Ascending aorta (tissue), 2 donors: ENCODE measurements at regions of chr1 and their contacts with region 1.

Region 1: DNA sequence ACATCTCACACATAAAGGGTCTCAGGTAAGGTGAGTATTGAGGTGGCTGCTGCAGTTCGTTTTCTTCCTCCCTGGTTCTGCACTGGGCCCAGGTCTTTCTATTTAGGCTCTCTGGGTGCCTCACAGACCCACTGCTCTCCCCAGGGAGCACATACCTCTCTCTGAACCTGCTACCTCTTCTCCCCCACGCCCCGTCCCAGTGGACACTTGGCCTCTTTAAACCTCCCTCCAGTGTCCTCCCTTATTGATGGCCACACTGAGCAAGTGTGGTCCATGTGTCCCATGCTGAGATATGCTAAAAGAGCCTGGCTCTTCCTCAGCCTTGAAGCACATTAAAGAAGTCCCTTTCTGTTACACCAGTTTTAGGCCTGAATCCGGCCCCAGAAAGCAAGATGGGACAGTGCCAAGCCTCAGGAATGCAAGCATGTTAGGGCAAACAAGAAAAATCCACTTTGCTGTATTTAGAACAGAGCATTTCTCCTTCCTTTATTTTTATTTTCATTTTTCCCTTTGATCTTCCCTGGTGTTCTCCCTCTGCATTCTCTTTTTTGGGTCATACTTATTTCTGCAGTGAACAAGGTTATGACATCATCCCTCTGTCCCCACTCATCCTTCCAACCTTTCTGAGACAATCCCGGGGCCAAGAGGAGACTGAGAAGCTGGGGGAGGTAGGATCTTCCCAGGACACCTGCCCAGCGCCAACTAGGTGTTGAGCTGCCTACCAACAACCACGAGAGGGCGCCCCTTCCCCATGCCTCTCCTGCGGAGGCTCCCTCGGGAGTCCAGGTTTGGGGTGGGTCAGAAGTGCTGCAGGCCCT is 5.0 kb upstream of the CHI3L2 start:
- DNase-seq: peak in 1 of 2 donors; percentile 77
- H3K4me3 ChIP-seq: no peak overlapping the region
- H3K27ac ChIP-seq: no peak overlapping the region
- H3K4me1 ChIP-seq: peaks cover 0 to 4% of the 10 kb centered on the region in 2 donors
- H3K27me3 ChIP-seq: no peaks in the 10 kb centered on the region
- CTCF ChIP-seq: peak; percentile 73 to 92 (median 76)

Region 2: DNA sequence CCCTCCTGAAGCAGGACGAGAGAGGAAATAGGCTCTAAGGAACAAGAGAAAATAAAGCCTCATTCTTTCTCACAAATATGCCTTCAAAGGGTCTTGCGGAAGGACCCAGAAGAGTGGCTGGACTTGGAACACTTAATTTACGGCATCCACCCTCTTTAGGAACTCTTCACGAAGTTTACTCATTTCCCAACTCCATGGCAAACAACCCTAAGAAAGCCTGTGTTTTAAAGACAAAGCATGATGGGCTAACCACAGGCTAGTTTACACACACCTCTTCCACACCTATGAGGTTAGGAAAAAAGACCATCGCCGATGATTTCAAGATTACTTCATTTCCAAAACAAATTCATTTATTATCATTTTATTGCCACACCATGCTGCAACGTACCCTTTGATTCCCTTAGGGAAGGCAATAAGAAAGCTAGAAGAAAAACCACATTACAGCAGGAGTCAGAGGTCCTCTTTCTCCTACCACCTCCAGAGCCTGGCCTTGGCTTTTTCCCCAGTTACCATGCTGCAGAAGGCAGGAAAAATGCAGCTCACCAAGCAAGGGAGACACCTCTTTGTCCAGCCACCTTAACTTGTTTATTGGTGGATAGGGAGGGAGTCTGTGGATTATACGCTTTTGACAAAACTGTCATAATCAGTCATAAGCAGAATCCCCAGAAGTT is 34.6 kb after region 1 on chr1:
- intact Hi-C with region 1: no loop called
- DNase-seq: no peak
- H3K4me3 ChIP-seq: no peak overlapping the region
- H3K27ac ChIP-seq: no peak overlapping the region
- H3K4me1 ChIP-seq: no peaks in the 10 kb centered on the region
- H3K27me3 ChIP-seq: no peaks in the 10 kb centered on the region
- CTCF ChIP-seq: no peak

Region 3: DNA sequence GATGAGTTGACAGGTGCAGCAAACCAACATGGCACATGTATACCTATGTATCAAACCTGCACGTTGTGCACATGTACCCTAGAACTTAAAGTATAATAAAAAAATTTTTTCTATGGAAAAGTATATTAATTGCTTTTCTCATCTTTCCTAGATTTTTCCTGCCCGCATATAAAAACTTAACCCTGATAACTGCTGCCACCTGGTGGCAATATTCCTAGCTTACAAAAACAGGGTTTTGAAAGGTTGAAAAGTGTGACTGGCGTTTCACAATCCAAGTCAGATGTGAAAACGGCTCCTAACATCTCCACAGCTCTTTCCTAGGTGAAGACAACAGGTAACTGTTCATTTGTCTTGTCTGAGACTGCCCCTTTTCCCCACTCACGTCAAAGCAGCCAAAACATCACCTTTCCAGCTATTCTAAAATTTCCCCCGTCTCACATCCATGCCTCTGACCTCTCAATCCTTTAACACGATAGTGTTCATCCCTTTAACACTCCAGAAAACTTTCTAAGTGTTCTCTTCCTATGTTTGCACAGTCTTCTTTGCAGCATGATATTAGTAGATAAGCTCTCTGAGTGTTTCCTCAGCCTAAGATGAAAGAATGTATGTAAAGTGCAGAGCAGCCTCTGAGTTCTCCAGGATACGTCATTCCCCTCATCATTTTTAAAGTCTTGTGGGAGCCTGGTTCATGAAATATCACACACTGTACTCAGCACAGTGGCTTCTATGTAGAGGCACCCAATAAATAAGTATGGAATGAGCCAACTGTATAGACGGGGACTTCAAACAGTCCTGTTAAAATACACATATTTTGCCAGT is 177.5 kb after region 1 on chr1:
- intact Hi-C with region 1: loop called (anchors 1 kb)
- DNase-seq: peak in 1 of 2 donors; percentile 68
- H3K4me3 ChIP-seq: no peak overlapping the region
- H3K27ac ChIP-seq: no peak overlapping the region
- H3K4me1 ChIP-seq: no peaks in the 10 kb centered on the region
- H3K27me3 ChIP-seq: no peaks in the 10 kb centered on the region
- CTCF ChIP-seq: peak; percentile 24 to 61 (median 57)

Region 4: GRCh38 chr1:111769517-111770146 is 547.1 kb after region 1 on chr1:
- intact Hi-C with region 1: loop called (anchors 10 kb)
- DNase-seq: no peak
- H3K4me3 ChIP-seq: no peak overlapping the region
- H3K27ac ChIP-seq: no peak overlapping the region
- H3K4me1 ChIP-seq: no peaks in the 10 kb centered on the region
- H3K27me3 ChIP-seq: no peaks in the 10 kb centered on the region
- CTCF ChIP-seq: peak; percentile 67 to 86 (median 80)